GM13976 (cell line): ENCODE measurements at regions of chr7 and their contacts with region 1.

Region 1: GRCh38 chr7:38660427-38661099 is 29.4 kb upstream of the AMPH start:
- DNase-seq: peak; percentile 51
- CTCF ChIP-seq: peak; percentile 76

Region 2: DNA sequence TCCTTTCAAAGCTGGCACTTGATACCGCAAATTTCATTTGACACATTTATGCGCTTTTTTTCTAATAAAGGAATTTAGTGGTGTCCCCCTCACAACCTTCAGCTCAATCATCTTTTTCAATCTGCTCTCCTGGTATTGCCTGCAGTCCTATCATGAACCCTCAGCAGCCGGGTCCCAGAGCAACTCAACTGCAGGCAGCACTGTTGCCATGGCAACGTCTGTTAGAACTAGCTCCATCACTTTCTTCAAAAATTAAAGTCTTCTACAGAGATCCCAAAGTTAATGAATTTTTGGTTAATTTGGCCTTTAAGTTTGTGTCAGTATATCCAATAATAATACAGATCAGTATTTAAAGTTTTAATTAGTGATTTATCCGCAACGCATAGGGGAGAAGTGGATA is 251.0 kb before region 1 on chr7:
- in situ Hi-C with region 1: loop called (anchors 10 kb)
- DNase-seq: no peak
- CTCF ChIP-seq: no peak